K562 (cell line): ENCODE measurements at regions of chr2 and their contacts with region 1.

Region 1: DNA sequence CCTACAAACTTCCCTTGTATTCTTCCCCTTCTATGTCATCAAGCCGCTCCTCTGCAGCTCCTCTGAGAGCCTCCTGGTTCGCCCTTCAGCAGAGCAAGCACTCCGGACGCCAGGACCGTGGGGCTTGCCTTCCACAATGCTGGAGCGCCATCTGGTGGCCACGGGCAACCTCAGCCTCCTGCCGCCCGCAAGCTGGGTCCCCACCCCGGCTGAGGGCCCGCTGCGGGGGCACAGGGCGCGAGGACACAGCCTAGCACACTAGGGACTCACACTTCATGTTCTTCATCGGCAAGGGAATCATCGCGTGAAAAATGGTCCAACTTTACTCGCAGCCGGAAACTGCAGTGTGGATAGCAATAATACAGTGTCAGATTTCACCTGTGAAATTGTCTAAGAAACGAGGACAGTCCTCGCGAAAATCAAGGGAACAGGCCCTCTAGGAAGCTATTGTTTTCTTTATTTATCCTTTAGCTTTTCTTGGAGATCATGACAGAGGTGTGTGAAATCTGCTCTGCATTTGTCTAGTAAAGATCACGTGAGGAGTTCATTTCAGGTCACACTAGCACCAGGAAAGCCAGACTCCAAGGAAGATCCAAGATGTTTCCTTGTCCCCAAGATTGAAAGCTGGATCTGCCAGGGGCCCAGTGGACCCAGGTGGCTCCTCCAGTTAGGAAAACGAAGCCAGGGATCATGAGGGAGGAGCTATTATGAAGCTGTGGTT is 5.8 kb downstream of the PRLH start:
- DNase-seq: peak; percentile 79 to 86 (median 84)
- ATAC-seq: peak; percentile 100
- H3K4me3 ChIP-seq: no peak overlapping the region
- H3K27ac ChIP-seq: no peak overlapping the region
- H3K4me1 ChIP-seq: peaks cover 0 to 3% of the 10 kb centered on the region in 2 experiments; a peak in 1 of 5 replicates
- H3K27me3 ChIP-seq: peaks cover 0 to 42% of the 10 kb centered on the region in 2 experiments; a peak in 3 of 5 replicates
- CTCF ChIP-seq: peak; percentile 84 to 98 (median 92)
- EP300 ChIP-seq: no peak
- POLR2A ChIP-seq: no peak
- RAD21 ChIP-seq: peak; percentile 97

Region 2: GRCh38 chr2:237291138-237291792 is 280.9 kb before region 1 on chr2:
- CTCF ChIA-PET with region 1: no interaction called
- POLR2A ChIA-PET with region 1: no interaction called
- in situ Hi-C with region 1: no loop called
- intact Hi-C with region 1: no loop called
- DNase-seq: peak in 2 of 4 experiments; percentile 14 to 29
- ATAC-seq: peak; percentile 32; the same call in 2 of the 3 replicates
- H3K4me3 ChIP-seq: no peak overlapping the region
- H3K27ac ChIP-seq: no peak overlapping the region
- H3K4me1 ChIP-seq: no peaks in the 10 kb centered on the region; a peak in 1 of 5 replicates
- H3K27me3 ChIP-seq: peaks cover 0 to 12% of the 10 kb centered on the region in 2 experiments; a peak in 1 of 5 replicates
- CTCF ChIP-seq: no peak
- EP300 ChIP-seq: no peak
- POLR2A ChIP-seq: no peak
- RAD21 ChIP-seq: no peak

Region 3: GRCh38 chr2:237512774-237513466 is 59.3 kb before region 1 on chr2:
- CTCF ChIA-PET with region 1: interaction called, 51 read pairs
- POLR2A ChIA-PET with region 1: interaction called, 4 read pairs
- in situ Hi-C with region 1: loop called (anchors 5 kb)
- intact Hi-C with region 1: loop called (anchors 1 kb)
- DNase-seq: peak; percentile 78 to 85 (median 82)
- ATAC-seq: peak; percentile 97
- H3K4me3 ChIP-seq: no peak overlapping the region
- H3K27ac ChIP-seq: no peak overlapping the region
- H3K4me1 ChIP-seq: no peaks in the 10 kb centered on the region
- H3K27me3 ChIP-seq: peaks cover 3 to 31% of the 10 kb centered on the region in 2 experiments; a peak in 3 of 5 replicates
- CTCF ChIP-seq: peak; percentile 83 to 99 (median 98)
- EP300 ChIP-seq: no peak
- POLR2A ChIP-seq: no peak
- RAD21 ChIP-seq: peak; percentile 84 to 92